ENCODE measurements at regions of chr9 and their contacts with region 1.

Region 1: GRCh38 chr9:34178520-34179212 is at the start of gene UBAP1:
- DNase-seq: peak; percentile 90 to 95
- H3K4me3 ChIP-seq: peak within 1 kb of the TSS; percentile 81 to 99 (median 90)
- H3K27ac ChIP-seq: peak within 1 kb of the TSS; percentile 96
- H3K4me1 ChIP-seq: no peaks in the 10 kb centered on the region; a peak in 1 of 7 replicates
- H3K27me3 ChIP-seq: no peaks in the 10 kb centered on the region
- CTCF ChIP-seq: no peak
- EP300 ChIP-seq: no peak
- POLR2A ChIP-seq: peak in 1 of 2 experiments; percentile 90; a peak in 2 of 3 replicates
- RAD21 ChIP-seq: no peak
- total RNA-seq, gene UBAP1: 31.3 and 32.4 TPM in 2 replicates

Region 2: DNA sequence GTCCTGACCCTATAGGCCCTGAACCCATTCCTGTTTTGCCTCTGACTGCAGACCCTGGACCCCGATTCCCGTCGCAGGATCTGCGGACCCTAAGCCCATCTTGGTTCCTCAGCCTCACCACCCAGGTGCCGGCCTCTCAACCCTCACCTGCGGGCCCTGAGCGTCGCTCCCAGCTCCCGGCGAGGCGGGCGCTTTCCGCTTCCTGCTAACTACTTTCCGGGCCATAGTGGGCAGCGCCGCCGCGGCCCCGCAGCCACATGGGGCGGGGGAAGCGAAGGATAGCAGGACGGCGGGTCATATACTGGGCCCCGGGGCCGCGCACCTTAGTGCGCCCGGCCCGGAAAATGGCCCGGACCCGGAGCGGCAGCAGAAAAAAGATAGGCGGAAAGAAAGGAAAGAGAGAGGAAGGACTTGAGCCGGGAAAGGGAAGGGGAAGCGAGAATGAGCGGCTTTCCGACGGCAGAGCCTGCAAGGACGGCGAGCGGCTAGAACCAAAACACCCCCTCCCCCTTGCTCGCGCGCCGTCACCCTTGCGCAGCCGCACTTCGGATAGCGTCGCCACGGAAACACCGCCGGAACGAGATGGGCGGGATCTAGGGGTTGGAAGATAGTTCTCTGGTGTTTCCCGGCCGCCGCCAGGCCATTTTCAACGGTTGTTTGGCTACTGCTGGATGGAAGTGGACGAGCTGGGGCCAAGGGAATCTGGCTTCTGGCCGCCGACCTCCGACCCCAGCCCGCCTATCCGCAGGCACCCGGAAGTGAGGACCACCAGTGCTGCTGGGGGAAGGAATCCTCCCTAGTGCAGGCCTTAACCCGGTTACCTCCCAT is 52.2 kb before region 1 on chr9 and contains the start of gene DCAF12:
- CTCF ChIA-PET with region 1: no interaction called
- POLR2A ChIA-PET with region 1: interaction called, 17 read pairs
- DNase-seq: peak; percentile 64 to 92
- H3K4me3 ChIP-seq: peak within 1 kb of the TSS; percentile 80 to 96 (median 90)
- H3K27ac ChIP-seq: peak within 1 kb of the TSS; percentile 72
- H3K4me1 ChIP-seq: peaks cover 0 to 8% (median 5%) of the 10 kb centered on the region in 4 experiments; a peak in 5 of 7 replicates
- H3K27me3 ChIP-seq: no peaks in the 10 kb centered on the region
- CTCF ChIP-seq: no peak
- EP300 ChIP-seq: no peak
- POLR2A ChIP-seq: peak; percentile 66 to 92
- RAD21 ChIP-seq: no peak; a peak in 1 of 4 replicates
- total RNA-seq, gene DCAF12: 27.5 and 29.2 TPM in 2 replicates

Region 3: GRCh38 chr9:34158362-34158869 is 20.2 kb before region 1 on chr9:
- CTCF ChIA-PET with region 1: interaction called, 10 read pairs
- POLR2A ChIA-PET with region 1: interaction called, 9 read pairs
- DNase-seq: no peak
- H3K4me3 ChIP-seq: no peak overlapping the region
- H3K27ac ChIP-seq: no peak overlapping the region
- H3K4me1 ChIP-seq: no peaks in the 10 kb centered on the region
- H3K27me3 ChIP-seq: no peaks in the 10 kb centered on the region
- CTCF ChIP-seq: no peak
- EP300 ChIP-seq: no peak
- POLR2A ChIP-seq: no peak
- RAD21 ChIP-seq: no peak

Region 4: DNA sequence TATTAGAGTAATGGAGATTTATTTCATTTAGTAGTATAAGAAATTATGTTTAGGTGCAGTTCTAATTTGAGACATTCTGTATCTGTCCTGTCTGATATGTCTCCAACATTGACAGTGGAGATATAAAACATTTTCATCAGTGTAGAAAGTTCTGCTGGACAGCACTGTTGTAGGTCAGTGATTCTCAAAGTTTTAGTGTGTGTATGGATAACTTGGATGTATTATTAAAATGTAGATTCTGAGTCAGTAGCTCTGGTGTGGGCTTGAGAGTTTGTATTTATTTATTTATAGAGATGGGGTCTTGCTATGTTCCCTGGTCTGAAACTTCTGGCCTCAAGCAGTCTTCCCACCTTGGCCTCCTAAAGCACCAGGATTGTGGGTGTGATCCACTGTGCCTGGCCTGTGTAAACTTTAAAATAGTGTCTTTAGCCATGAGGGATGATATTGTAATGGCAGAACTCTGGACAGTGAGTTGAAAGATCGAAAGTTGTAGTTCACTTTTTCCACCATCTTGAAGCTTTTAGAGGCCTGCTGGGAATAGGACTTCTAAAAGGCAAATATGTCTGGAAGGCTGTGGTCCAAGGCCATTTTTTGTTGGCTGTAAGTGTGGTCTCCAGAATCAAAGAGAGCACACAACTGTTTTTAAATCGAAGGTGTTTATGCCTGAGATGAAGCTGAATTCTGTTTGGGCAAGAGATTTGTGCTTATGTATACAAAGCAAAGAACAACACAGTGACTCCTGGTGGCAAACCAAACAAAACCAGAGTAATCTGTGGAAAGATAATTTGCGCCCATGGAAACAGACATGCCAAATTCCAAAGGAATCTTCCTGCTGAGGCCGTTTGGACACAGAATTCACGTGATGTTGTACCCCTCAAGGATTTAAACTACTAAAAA is 12.6 kb after region 1 on chr9:
- CTCF ChIA-PET with region 1: interaction called, 3 read pairs
- POLR2A ChIA-PET with region 1: interaction called, 34 read pairs
- DNase-seq: no peak
- H3K4me3 ChIP-seq: no peak overlapping the region
- H3K27ac ChIP-seq: no peak overlapping the region
- H3K4me1 ChIP-seq: no peaks in the 10 kb centered on the region
- H3K27me3 ChIP-seq: no peaks in the 10 kb centered on the region
- CTCF ChIP-seq: peak in 2 of 3 experiments; percentile 13 to 43; a peak in 1 of 4 replicates
- EP300 ChIP-seq: no peak
- POLR2A ChIP-seq: no peak
- RAD21 ChIP-seq: peak in 1 of 2 experiments; percentile 5; a peak in 1 of 4 replicates

Region 5: DNA sequence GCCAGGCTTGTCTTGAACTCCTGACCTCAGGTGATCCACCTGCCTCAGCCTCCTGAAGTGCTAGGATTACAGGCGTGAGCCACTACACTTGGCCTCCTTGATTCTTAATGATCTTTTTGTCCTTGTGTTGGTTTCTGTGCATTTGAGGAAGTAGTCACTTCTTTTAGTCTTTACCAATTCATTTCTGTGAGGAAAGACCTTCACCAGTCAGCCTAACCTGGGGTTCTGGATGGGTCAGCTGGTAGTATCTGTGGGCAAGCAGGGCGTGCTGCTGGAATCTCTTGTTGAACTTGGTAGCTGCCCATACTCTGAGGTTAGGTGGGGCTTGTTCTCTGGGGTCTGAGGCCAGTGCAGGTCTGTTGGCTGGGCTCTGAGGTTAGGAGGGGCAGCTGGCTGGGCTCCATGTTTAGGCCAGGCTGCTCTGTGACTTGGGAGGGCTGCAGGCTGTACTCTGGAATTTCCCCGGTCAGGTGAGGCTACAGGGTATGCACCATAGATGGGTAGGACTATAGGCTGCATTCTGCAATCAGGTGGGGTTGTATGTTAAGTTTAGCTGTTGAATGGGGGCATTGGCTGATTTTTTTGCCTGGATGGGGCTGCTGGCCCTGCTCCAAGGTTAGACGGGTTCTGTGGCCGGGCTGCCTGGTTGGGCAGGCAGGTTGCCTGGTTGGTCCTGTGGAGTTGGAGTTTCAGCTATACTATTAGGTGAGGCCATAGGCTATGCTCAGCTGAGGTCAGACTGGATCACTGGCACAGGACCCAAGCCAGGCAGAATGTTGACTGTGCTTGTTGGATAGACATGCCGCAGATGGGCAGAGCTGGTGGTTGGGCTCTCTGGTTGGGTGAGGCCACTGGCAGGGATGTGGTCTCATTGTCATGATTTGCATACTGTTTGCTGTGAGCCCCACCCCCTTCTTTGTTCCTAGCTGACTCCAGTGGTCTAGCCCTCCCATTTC is 19.4 kb after region 1 on chr9:
- CTCF ChIA-PET with region 1: interaction called, 3 read pairs
- POLR2A ChIA-PET with region 1: interaction called, 34 read pairs
- DNase-seq: peak in 1 of 2 experiments; percentile 68
- H3K4me3 ChIP-seq: no peak overlapping the region
- H3K27ac ChIP-seq: peak overlapping the region; percentile 49; the same call in 1 of the 2 replicates
- H3K4me1 ChIP-seq: peaks cover 6 to 12% (median 7%) of the 10 kb centered on the region in 4 experiments; a peak in 6 of 7 replicates
- H3K27me3 ChIP-seq: no peaks in the 10 kb centered on the region
- CTCF ChIP-seq: no peak
- EP300 ChIP-seq: no peak
- POLR2A ChIP-seq: peak; percentile 30 to 55; a peak in 2 of 3 replicates
- RAD21 ChIP-seq: no peak

Region 6: DNA sequence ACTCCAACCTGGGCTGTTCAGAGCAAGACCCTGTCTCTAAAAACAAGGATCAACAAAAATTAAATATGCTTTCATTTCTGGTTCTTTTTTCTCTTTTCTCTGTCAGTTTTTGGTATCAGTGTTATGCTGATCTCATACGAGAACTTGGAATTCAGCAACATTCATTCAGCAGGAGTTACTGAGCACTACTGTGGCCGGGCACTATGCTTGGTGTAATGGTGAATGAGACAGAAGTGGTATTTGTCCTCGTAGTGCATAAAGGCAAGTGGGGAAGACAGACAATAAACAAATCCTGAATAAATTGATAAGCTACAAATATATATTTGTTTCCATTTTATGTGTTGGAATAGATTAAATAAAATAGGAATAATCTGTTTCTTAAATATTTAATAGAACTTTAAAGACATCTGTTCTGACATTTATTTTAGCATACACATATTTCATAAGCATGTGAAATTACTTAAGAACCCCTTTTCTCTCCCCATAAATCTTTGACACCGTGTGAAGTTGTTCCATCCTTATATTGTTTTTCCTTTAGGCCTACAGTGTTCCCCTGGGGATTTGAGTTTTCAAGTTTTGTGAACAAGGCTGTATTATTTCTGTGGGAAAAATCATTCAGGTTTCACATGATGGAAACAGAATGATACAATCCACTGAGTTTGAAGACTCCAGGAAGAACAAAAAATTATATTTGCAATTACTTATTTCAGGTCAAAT is 24.8 kb after region 1 on chr9:
- CTCF ChIA-PET with region 1: interaction called, 3 read pairs
- POLR2A ChIA-PET with region 1: interaction called, 19 read pairs
- DNase-seq: no peak
- H3K4me3 ChIP-seq: no peak overlapping the region
- H3K27ac ChIP-seq: no peak overlapping the region
- H3K4me1 ChIP-seq: peaks cover 0 to 4% (median 1%) of the 10 kb centered on the region in 4 experiments; a peak in 4 of 7 replicates
- H3K27me3 ChIP-seq: no peaks in the 10 kb centered on the region
- CTCF ChIP-seq: no peak
- EP300 ChIP-seq: no peak
- POLR2A ChIP-seq: no peak
- RAD21 ChIP-seq: no peak

Region 7: GRCh38 chr9:34222451-34222850 is 43.8 kb after region 1 on chr9:
- CTCF ChIA-PET with region 1: interaction called, 3 read pairs
- POLR2A ChIA-PET with region 1: interaction called, 12 read pairs
- DNase-seq: no peak
- H3K4me3 ChIP-seq: no peak overlapping the region
- H3K27ac ChIP-seq: no peak overlapping the region
- H3K4me1 ChIP-seq: no peaks in the 10 kb centered on the region
- H3K27me3 ChIP-seq: no peaks in the 10 kb centered on the region
- CTCF ChIP-seq: no peak
- EP300 ChIP-seq: no peak
- POLR2A ChIP-seq: no peak
- RAD21 ChIP-seq: no peak